Activated CD4-positive, alpha-beta T cell treated with anti-CD3 and anti-CD28 coated beads for 36 hours (primary cell): ENCODE measurements at regions of chr5 and their contacts with region 1.

Region 1: GRCh38 chr5:59188419-59189225 is 605.7 kb downstream of the RAB3C start:
- DNase-seq: peak; percentile 78
- ATAC-seq: peak; percentile 75
- H3K4me3 Mint-ChIP-seq: no peak overlapping the region
- H3K27ac Mint-ChIP-seq: no peak overlapping the region
- H3K4me1 Mint-ChIP-seq: peaks cover 5% of the 10 kb centered on the region
- H3K27me3 Mint-ChIP-seq: peaks cover 14% of the 10 kb centered on the region

Region 2: DNA sequence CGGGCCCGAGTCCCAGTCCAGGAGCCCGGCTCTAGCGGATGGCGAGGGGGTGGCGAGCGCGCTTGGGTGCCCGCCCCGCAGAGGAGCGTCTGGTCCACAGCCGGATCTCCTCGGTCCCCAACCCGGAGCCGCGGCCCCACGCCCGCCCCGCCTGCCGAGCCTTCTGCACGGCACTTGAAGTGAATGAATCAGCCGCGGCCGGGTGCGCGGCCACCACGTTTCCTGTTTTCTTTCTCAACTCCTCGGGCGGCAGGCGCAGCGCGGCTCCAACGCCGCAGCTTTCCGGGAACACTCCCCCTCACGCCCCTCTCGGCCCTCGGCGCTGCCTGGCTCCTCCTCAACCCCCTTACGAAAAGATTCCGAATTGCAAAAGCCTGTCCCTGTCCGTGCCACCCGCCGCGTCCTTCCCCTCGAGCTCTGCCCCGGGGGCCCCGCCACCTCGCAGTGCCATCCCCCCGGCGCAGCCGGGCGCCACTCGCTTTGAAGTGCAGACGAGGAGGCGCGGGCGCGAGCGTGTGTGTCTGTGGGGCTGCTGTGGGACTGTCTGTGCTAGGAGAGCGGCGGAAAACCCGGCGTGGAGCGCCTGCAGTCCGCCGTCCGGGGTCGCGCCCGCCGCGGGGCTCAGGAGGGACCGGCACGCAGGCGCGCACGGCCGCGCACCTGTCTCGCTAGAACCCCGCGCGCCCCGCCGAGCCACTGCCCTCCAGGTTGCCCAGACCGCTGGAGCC is 149.2 kb before region 1 on chr5:
- CTCF ChIA-PET with region 1: interaction called, 15 read pairs
- POLR2A ChIA-PET with region 1: no interaction called
- intact Hi-C with region 1: no loop called
- DNase-seq: peak; percentile 95
- ATAC-seq: peak; percentile 75
- H3K4me3 Mint-ChIP-seq: peak overlapping the region; percentile 86
- H3K27ac Mint-ChIP-seq: peak overlapping the region; percentile 88
- H3K4me1 Mint-ChIP-seq: peaks cover 39% of the 10 kb centered on the region
- H3K27me3 Mint-ChIP-seq: no peaks in the 10 kb centered on the region

Region 3: GRCh38 chr5:59209758-59210359 is 21.2 kb after region 1 on chr5:
- CTCF ChIA-PET with region 1: interaction called, 22 read pairs
- POLR2A ChIA-PET with region 1: no interaction called
- intact Hi-C with region 1: no loop called
- DNase-seq: no peak
- ATAC-seq: no peak
- H3K4me3 Mint-ChIP-seq: no peak overlapping the region
- H3K27ac Mint-ChIP-seq: no peak overlapping the region
- H3K4me1 Mint-ChIP-seq: peaks cover 8% of the 10 kb centered on the region
- H3K27me3 Mint-ChIP-seq: peaks cover 14% of the 10 kb centered on the region

Region 4: DNA sequence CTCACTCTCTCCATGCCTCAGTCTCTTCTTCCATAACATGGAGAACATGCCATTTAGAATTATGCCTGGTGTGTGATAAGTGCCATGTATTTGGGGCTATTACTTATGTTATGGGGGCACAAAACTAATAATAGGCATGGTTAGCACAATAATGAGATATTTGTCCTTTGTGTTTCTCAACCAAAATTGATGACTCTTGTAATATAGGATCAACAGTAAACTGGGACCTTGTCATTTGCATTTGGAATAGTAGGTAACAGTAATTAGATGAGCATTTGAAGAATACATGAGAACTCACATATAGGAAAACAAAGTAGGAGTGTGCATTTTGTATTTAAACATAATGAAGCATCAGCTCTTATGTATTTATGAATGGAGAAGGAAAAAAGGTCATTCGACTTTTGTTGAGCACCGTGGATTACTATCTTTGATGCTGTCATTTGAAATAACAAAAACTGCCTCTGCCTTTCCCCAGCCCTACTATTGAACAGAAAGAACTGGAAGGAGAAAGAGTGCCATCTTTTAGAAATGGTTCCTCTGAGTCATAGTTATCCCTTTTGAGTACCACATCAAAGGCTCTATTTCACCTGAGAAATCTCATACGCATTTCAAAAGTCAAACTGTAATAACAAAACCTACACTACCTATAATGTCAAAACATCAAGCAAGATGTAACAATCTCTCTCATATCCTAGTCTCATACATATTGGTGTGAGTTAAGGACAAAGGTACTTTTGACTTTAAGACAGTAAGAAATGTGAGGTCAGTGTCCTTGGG is 49.7 kb after region 1 on chr5:
- CTCF ChIA-PET with region 1: interaction called, 9 read pairs
- POLR2A ChIA-PET with region 1: no interaction called
- intact Hi-C with region 1: loop called in 1 of 2 experiments (anchors 1 kb)
- DNase-seq: peak; percentile 20
- ATAC-seq: peak; percentile 96
- H3K4me3 Mint-ChIP-seq: no peak overlapping the region
- H3K27ac Mint-ChIP-seq: no peak overlapping the region
- H3K4me1 Mint-ChIP-seq: peaks cover 22% of the 10 kb centered on the region
- H3K27me3 Mint-ChIP-seq: peaks cover 45% of the 10 kb centered on the region

Region 5: DNA sequence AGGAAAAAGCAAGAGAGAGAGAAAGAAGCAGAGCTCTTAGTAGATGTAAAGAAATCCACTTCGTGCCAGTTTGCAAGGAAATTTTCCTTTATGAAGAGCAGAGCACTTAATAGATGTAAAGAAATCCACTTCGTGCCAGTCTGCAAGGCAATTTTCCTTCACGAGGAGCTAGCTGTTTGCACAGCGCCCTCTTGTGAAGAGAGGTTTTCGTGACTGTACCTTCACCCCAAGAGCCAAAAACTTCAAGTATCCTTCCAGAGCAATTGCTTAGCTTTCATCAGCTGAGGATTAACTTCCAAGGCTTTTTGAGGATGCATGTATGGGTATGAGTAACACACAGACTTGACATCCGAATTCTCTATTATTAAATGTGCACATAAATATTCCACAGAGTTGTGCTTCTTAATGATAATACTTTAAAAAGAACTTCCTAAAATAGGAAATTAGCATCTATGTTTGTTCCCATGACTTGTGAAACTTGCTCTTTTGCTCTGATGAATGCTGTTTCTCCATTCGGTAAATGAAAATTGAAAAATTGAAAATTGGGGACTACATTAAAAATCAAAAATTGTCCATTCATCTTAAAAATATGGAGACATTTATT is 179.3 kb after region 1 on chr5:
- CTCF ChIA-PET with region 1: interaction called, 70 read pairs
- POLR2A ChIA-PET with region 1: no interaction called
- intact Hi-C with region 1: loop called (anchors 1 kb)
- DNase-seq: peak; percentile 72
- ATAC-seq: peak; percentile 65
- H3K4me3 Mint-ChIP-seq: no peak overlapping the region
- H3K27ac Mint-ChIP-seq: no peak overlapping the region
- H3K4me1 Mint-ChIP-seq: no peaks in the 10 kb centered on the region
- H3K27me3 Mint-ChIP-seq: peaks cover 4% of the 10 kb centered on the region

Region 6: DNA sequence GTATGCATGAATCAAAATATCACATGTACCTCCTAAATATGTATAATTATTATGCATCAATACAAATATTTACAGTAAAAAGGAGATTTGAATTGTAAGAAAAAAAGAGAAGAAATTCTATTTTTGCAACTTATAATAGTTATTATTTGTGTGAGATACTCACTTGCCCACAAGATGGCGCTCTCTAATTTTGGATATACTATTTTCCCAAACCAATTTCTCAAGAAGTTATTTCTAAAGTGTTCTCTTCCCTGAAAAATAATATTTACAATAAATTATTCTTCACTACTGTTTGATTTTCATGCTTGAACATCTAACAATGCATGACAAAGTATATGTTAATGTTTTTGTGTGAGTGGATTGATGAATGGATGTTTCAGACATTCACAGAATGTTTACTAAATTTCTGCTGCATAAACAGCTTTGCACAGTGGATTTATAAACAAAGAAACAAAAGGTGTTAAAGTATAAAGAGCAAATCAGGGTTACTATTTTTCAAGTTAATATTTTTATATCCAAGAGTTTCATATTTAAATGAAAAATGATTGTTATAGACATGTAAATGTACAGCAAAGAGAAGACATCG is 201.5 kb after region 1 on chr5:
- CTCF ChIA-PET with region 1: interaction called, 132 read pairs
- POLR2A ChIA-PET with region 1: no interaction called
- intact Hi-C with region 1: no loop called
- DNase-seq: peak; percentile 27
- ATAC-seq: no peak
- H3K4me3 Mint-ChIP-seq: no peak overlapping the region
- H3K27ac Mint-ChIP-seq: no peak overlapping the region
- H3K4me1 Mint-ChIP-seq: no peaks in the 10 kb centered on the region
- H3K27me3 Mint-ChIP-seq: peaks cover 6% of the 10 kb centered on the region

Region 7: GRCh38 chr5:59673438-59674058 is 484.9 kb after region 1 on chr5:
- CTCF ChIA-PET with region 1: interaction called, 6 read pairs
- POLR2A ChIA-PET with region 1: no interaction called
- intact Hi-C with region 1: loop called (anchors 2 to 5 kb)
- DNase-seq: no peak
- ATAC-seq: peak; percentile 42
- H3K4me3 Mint-ChIP-seq: no peak overlapping the region
- H3K27ac Mint-ChIP-seq: no peak overlapping the region
- H3K4me1 Mint-ChIP-seq: no peaks in the 10 kb centered on the region
- H3K27me3 Mint-ChIP-seq: peaks cover 1% of the 10 kb centered on the region